IMR-90 (cell line): ENCODE measurements at regions of chr5 and their contacts with region 1.

Region 1: GRCh38 chr5:174418928-174419796 is 305.2 kb upstream of the MSX2 start:
- DNase-seq: peak; percentile 91
- ATAC-seq: peak; percentile 97
- H3K4me3 ChIP-seq: peak overlapping the region; percentile 2
- H3K27ac ChIP-seq: no peak overlapping the region
- H3K4me1 ChIP-seq: peaks cover 1% of the 10 kb centered on the region; the same call in 1 of the 2 replicates
- H3K27me3 ChIP-seq: no peaks in the 10 kb centered on the region; the same call in 1 of the 2 replicates
- CTCF ChIP-seq: peak; percentile 98
- POLR2A ChIP-seq: peak; percentile 51; the same call in 1 of the 2 replicates
- RAD21 ChIP-seq: peak; percentile 99

Region 2: GRCh38 chr5:174571662-174572397 is 152.7 kb after region 1 on chr5:
- CTCF ChIA-PET with region 1: no interaction called
- POLR2A ChIA-PET with region 1: no interaction called
- dilution Hi-C with region 1: no loop called
- in situ Hi-C with region 1: no loop called
- intact Hi-C with region 1: loop called (anchors 1 kb)
- DNase-seq: peak; percentile 98
- ATAC-seq: peak; percentile 92
- H3K4me3 ChIP-seq: no peak overlapping the region
- H3K27ac ChIP-seq: peak overlapping the region; percentile 77
- H3K4me1 ChIP-seq: peaks cover 12% of the 10 kb centered on the region
- H3K27me3 ChIP-seq: no peaks in the 10 kb centered on the region
- CTCF ChIP-seq: peak; percentile 59
- POLR2A ChIP-seq: no peak
- RAD21 ChIP-seq: peak; percentile 48

Region 3: GRCh38 chr5:174735498-174736330 is 316.6 kb after region 1 on chr5:
- CTCF ChIA-PET with region 1: interaction called, 8 read pairs
- POLR2A ChIA-PET with region 1: no interaction called
- dilution Hi-C with region 1: no loop called
- in situ Hi-C with region 1: loop called (anchors 25 kb)
- intact Hi-C with region 1: loop called (anchors 1 kb)
- DNase-seq: no peak
- ATAC-seq: peak; percentile 51
- H3K4me3 ChIP-seq: peak overlapping the region; percentile 2; the same call in 1 of the 2 replicates
- H3K27ac ChIP-seq: peak overlapping the region; percentile 36
- H3K4me1 ChIP-seq: peaks cover 6% of the 10 kb centered on the region
- H3K27me3 ChIP-seq: peaks cover 27% of the 10 kb centered on the region
- CTCF ChIP-seq: peak; percentile 39
- POLR2A ChIP-seq: no peak
- RAD21 ChIP-seq: peak; percentile 61

Region 4: DNA sequence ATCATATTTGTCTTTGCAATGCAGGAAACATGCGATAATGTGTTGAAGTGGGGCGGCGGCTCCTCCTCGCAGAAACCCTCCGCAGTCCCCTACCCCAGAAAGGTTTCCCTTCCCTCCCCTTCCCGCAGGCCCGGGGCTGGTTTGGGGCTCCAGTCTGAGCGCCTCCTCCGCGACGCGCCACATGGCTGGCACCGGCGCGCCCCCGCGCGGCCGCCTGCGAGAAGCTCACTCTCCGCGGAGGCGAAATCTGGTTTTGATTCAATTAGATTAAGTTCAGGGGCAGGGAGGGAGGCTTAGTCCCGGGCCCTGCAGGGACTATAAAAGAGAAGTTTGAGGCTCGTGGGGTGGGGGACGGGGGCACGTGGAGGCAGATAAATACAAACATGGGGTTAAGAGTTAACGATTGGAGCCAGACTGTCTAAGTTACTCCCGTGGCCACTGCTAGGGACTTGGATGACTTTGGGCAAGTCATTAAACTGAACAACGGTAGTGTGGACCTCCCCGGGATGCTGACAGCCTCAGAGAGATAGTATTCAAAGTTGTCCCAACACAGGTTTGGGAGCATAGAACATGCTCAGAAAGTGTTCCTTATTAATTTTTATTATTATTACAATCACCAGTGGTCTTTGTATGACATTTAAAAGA is 374.6 kb after region 1 on chr5:
- CTCF ChIA-PET with region 1: interaction called, 24 read pairs
- POLR2A ChIA-PET with region 1: no interaction called
- dilution Hi-C with region 1: no loop called
- in situ Hi-C with region 1: loop called (anchors 5 kb)
- intact Hi-C with region 1: loop called (anchors 1 kb)
- DNase-seq: peak; percentile 43
- ATAC-seq: peak; percentile 98
- H3K4me3 ChIP-seq: no peak overlapping the region
- H3K27ac ChIP-seq: no peak overlapping the region
- H3K4me1 ChIP-seq: peaks cover 3% of the 10 kb centered on the region; the same call in 1 of the 2 replicates
- H3K27me3 ChIP-seq: peaks cover 6% of the 10 kb centered on the region
- CTCF ChIP-seq: peak; percentile 89
- POLR2A ChIP-seq: no peak
- RAD21 ChIP-seq: peak; percentile 94

Region 5: DNA sequence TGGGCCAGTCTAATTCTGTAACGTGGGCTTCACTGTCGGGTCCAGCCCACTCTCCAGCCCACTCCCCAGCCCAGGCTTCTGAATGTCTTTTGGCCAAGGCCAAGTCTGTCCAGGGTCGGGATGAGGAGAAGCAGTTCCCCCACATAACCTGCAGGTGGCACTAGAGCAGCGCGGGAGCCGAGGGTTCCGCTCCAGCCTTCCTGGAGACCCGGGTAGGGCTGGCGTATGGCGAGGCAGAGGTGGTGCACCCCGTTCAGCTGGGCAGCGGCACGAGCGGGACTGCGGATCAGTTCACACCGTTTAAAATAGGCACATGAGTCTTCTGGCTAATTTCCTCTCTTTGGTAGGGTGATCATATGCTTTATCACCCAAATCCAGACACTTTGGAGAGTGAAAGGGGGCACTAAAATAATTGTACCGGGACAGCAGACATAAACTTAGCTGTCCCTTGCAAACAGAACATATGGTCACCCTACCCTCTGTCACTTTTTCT is 491.1 kb after region 1 on chr5:
- CTCF ChIA-PET with region 1: no interaction called
- POLR2A ChIA-PET with region 1: no interaction called
- dilution Hi-C with region 1: no loop called
- in situ Hi-C with region 1: no loop called
- intact Hi-C with region 1: loop called (anchors 1 kb)
- DNase-seq: peak; percentile 18
- ATAC-seq: peak; percentile 100
- H3K4me3 ChIP-seq: no peak overlapping the region
- H3K27ac ChIP-seq: no peak overlapping the region
- H3K4me1 ChIP-seq: no peaks in the 10 kb centered on the region
- H3K27me3 ChIP-seq: no peaks in the 10 kb centered on the region
- CTCF ChIP-seq: peak; percentile 69
- POLR2A ChIP-seq: no peak
- RAD21 ChIP-seq: peak; percentile 64